HCT116 (cell line): ENCODE measurements at regions of chr10 and their contacts with region 1.

Region 1: DNA sequence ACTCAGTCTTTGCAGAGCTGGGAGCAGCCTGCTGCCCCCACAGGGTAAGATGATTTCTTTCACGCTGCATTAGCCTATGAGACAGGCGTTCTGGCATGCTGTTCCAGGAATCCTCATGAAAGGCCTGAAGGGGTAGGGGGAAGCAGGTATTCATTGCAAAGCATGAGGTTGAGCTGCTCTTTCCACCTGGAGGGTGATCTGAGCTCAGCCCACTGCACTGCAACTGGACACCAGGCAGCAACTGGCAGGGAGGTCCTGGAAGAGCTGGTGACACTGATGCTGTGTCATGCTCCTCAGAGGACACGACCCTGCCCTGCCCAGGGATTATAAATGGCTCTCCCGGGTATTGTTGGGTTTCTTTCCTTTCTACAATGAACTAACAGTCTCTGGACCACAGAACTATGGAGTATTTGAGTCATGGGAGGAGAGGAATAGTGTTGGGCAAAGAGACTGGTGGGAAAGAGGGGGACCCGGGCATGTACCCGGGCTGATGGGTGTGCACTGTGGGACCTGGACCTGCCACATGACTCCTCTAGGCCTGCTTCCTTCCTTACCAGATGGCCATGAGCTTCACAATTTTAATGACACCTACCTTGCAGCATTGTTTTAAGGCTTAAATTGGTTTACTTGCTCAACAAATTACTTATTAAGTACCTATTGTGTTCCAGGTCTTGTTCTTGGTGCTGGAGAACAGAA is 24.3 kb downstream of the SLC25A28 start:
- DNase-seq: no peak
- ATAC-seq: peak; percentile 71
- H3K4me3 ChIP-seq: no peak overlapping the region
- H3K27ac ChIP-seq: no peak overlapping the region
- H3K4me1 ChIP-seq: peaks cover 21 to 39% of the 10 kb centered on the region in 2 experiments
- H3K27me3 ChIP-seq: no peaks in the 10 kb centered on the region
- CTCF ChIP-seq: no peak
- POLR2A ChIP-seq: no peak
- RAD21 ChIP-seq: no peak

Region 2: GRCh38 chr10:98676895-98677294 is 919.0 kb before region 1 on chr10:
- CTCF ChIA-PET with region 1: no interaction called
- POLR2A ChIA-PET with region 1: no interaction called
- RAD21 ChIA-PET with region 1: no interaction called
- intact Hi-C with region 1: no loop called
- DNase-seq: no peak
- ATAC-seq: peak; percentile 63; the same call in 1 of the 2 replicates
- H3K4me3 ChIP-seq: no peak overlapping the region
- H3K27ac ChIP-seq: no peak overlapping the region
- H3K4me1 ChIP-seq: no peaks in the 10 kb centered on the region
- H3K27me3 ChIP-seq: peaks cover 40% of the 10 kb centered on the region
- CTCF ChIP-seq: peak in 2 of 3 experiments; percentile 32 to 39; a peak in 2 of 6 replicates
- POLR2A ChIP-seq: no peak
- RAD21 ChIP-seq: no peak

Region 3: GRCh38 chr10:99612167-99612831 is 16.4 kb after region 1 on chr10:
- CTCF ChIA-PET with region 1: interaction called, 10 read pairs
- POLR2A ChIA-PET with region 1: no interaction called
- RAD21 ChIA-PET with region 1: no interaction called
- intact Hi-C with region 1: no loop called
- DNase-seq: peak; percentile 59
- ATAC-seq: peak; percentile 88
- H3K4me3 ChIP-seq: no peak overlapping the region
- H3K27ac ChIP-seq: no peak overlapping the region
- H3K4me1 ChIP-seq: no peaks in the 10 kb centered on the region
- H3K27me3 ChIP-seq: no peaks in the 10 kb centered on the region
- CTCF ChIP-seq: peak in 2 of 3 experiments; percentile 87 to 97; a peak in 4 of 6 replicates
- POLR2A ChIP-seq: no peak
- RAD21 ChIP-seq: no peak